Activated B cell treated with CpG ODN at 0.5 μM for 24 hours (primary cell): ENCODE measurements at regions of chr18 and their contacts with region 1.

Region 1: DNA sequence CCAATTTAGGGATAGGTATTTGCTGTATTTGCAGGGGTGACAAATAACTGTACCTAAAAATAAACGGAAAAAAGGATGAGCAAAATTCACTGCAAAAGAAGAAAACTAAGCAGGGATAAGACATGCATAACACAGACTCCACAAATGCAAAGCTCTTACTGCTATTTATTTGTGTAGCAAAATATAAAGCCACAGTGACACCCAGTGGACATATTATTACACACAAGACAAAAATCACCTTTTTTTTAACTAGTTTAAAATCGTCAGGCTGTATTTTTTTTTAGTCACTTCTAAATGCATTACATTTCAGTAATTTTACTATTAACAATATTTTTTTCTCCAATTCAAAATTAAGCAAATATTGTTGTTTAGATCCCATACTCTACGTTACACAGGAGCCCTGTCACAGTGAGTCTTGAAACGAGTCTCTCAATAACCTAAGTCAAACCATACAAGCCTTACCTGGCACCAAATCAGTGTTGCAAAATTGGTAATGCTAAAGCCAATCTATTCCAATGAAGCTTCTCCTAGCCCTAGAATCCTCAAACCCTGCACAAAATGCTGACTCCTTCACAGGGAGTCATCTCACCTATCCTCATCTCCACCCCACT is 23.7 kb downstream of the METTL4 start:
- DNase-seq: no peak
- ATAC-seq: peak; percentile 47
- H3K4me3 Mint-ChIP-seq: no peak overlapping the region
- H3K27ac Mint-ChIP-seq: no peak overlapping the region
- H3K4me1 Mint-ChIP-seq: peaks cover 14% of the 10 kb centered on the region
- H3K27me3 Mint-ChIP-seq: no peaks in the 10 kb centered on the region
- CTCF ChIP-seq: no peak

Region 2: GRCh38 chr18:741931-742512 is 1805.6 kb before region 1 on chr18:
- CTCF ChIA-PET with region 1: interaction called, 5 read pairs
- POLR2A ChIA-PET with region 1: no interaction called
- intact Hi-C with region 1: loop called (anchors 5 kb)
- DNase-seq: no peak
- ATAC-seq: peak; percentile 52
- H3K4me3 Mint-ChIP-seq: no peak overlapping the region
- H3K27ac Mint-ChIP-seq: no peak overlapping the region
- H3K4me1 Mint-ChIP-seq: no peaks in the 10 kb centered on the region
- H3K27me3 Mint-ChIP-seq: no peaks in the 10 kb centered on the region
- CTCF ChIP-seq: no peak

Region 3: DNA sequence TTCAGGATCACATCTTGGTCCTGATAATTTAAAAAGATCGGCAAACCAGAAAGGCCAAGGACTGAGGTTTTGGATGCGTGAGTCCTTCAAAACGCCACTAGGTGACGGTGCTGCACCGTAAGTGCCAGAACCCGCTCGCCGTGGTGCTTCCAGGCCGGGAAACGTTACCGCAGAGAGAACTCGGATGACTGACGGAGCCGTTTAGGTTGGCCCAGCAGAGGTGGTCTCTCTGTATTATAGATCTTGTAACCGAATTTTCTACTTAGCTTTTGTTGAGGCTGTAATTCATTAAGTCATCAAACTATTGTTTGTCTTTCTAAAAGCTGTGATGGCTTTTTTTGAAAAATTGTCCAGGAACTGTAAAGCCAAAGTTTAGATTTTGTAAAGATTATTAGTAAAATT is 1682.7 kb before region 1 on chr18:
- CTCF ChIA-PET with region 1: interaction called, 4 read pairs
- POLR2A ChIA-PET with region 1: no interaction called
- intact Hi-C with region 1: loop called (anchors 2 kb)
- DNase-seq: no peak
- ATAC-seq: no peak
- H3K4me3 Mint-ChIP-seq: no peak overlapping the region
- H3K27ac Mint-ChIP-seq: no peak overlapping the region
- H3K4me1 Mint-ChIP-seq: peaks cover 6% of the 10 kb centered on the region
- H3K27me3 Mint-ChIP-seq: peaks cover 20% of the 10 kb centered on the region
- CTCF ChIP-seq: no peak

Region 4: GRCh38 chr18:1585879-1586488 is 961.6 kb before region 1 on chr18:
- CTCF ChIA-PET with region 1: interaction called, 9 read pairs
- POLR2A ChIA-PET with region 1: no interaction called
- intact Hi-C with region 1: loop called (anchors 1 kb)
- DNase-seq: no peak
- ATAC-seq: peak; percentile 40
- H3K4me3 Mint-ChIP-seq: no peak overlapping the region
- H3K27ac Mint-ChIP-seq: no peak overlapping the region
- H3K4me1 Mint-ChIP-seq: no peaks in the 10 kb centered on the region
- H3K27me3 Mint-ChIP-seq: no peaks in the 10 kb centered on the region
- CTCF ChIP-seq: no peak

Region 5: GRCh38 chr18:2104620-2105462 is 442.7 kb before region 1 on chr18:
- CTCF ChIA-PET with region 1: interaction called, 12 read pairs
- POLR2A ChIA-PET with region 1: no interaction called
- intact Hi-C with region 1: loop called (anchors 1 kb)
- DNase-seq: no peak
- ATAC-seq: no peak
- H3K4me3 Mint-ChIP-seq: no peak overlapping the region
- H3K27ac Mint-ChIP-seq: no peak overlapping the region
- H3K4me1 Mint-ChIP-seq: peaks cover 5% of the 10 kb centered on the region
- H3K27me3 Mint-ChIP-seq: peaks cover 4% of the 10 kb centered on the region
- CTCF ChIP-seq: no peak

Region 6: DNA sequence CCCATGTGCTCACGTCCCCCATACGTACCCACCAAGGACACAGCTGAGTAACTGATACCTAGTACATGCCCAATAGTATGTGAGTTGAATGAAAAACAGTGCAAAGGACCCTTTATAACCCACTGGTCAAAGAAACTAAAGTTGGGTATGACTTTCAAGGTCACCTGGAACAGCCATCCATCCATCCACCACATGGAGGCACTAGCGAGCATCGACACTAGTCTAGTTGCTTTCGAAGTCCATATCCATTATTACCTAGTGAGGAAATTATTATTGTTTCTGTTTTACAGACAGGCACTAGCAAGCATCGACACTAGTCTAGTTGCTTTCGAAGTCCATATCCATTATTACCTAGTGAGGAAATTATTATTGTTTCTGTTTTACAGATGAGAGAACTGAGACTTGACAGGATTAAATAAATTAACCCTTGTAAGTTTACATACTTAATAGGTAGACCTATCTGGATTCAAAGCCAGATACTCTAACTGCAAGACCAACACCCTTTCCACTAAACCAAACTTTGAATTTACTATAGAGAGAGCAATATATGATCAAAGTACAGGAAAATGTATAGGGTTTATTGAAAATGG is 209.9 kb before region 1 on chr18:
- CTCF ChIA-PET with region 1: interaction called, 44 read pairs
- POLR2A ChIA-PET with region 1: no interaction called
- intact Hi-C with region 1: loop called (anchors 1 kb)
- DNase-seq: no peak
- ATAC-seq: peak; percentile 58
- H3K4me3 Mint-ChIP-seq: no peak overlapping the region
- H3K27ac Mint-ChIP-seq: no peak overlapping the region
- H3K4me1 Mint-ChIP-seq: no peaks in the 10 kb centered on the region
- H3K27me3 Mint-ChIP-seq: peaks cover 21% of the 10 kb centered on the region
- CTCF ChIP-seq: peak; percentile 41

Region 7: DNA sequence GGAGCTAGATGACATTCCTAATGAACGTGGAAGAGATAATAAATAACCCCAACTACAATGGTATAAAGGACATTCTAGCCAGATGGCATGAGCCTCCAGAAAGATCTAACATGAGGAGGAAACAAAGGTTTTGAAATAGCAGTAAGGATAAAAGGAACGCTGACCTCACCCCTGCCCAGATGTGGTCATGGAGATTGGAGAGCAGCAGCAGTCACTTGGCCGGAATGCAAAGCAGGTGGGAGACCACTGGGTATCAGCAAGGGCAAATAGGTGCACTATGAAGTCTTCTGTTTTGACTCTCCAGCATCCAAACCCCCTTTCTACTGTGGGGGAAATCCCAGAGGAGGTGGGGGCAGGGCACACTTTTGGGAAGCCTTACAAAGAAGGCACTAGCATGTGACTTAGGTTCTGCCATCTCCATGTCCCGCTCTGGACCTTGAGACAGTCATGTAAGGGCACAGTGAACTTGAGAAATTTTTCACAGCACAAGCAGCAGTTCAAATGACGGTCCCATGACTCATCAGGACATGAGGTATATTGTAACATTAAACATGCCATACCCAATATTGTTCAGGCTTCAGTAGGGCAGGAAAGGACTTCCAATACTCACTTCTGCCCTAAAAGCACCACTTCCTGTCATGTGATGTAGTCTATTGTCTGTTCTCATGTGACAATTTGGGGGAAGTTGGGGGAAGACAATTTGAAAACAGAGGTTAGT is 31.5 kb before region 1 on chr18:
- CTCF ChIA-PET with region 1: no interaction called
- POLR2A ChIA-PET with region 1: no interaction called
- intact Hi-C with region 1: no loop called
- DNase-seq: no peak
- ATAC-seq: no peak
- H3K4me3 Mint-ChIP-seq: no peak overlapping the region
- H3K27ac Mint-ChIP-seq: no peak overlapping the region
- H3K4me1 Mint-ChIP-seq: peaks cover 16% of the 10 kb centered on the region
- H3K27me3 Mint-ChIP-seq: no peaks in the 10 kb centered on the region
- CTCF ChIP-seq: no peak